ENCODE measurements at regions of chr3 and their contacts with region 1.

Region 1: GRCh38 chr3:58433400-58434169 is at the start of gene PDHB:
- DNase-seq: peak; percentile 78 to 91 (median 90)
- ATAC-seq: peak; percentile 98
- H3K4me3 ChIP-seq: peak within 1 kb of the TSS; percentile 92
- H3K4me3 Mint-ChIP-seq: peak within 1 kb of the TSS; percentile 90 to 98 (median 95)
- H3K27ac ChIP-seq: peak within 1 kb of the TSS; percentile 81
- H3K27ac Mint-ChIP-seq: peak within 1 kb of the TSS; percentile 94 to 98 (median 97)
- H3K4me1 ChIP-seq: peaks cover 14 to 15% of the 10 kb centered on the region in 2 donors
- H3K4me1 Mint-ChIP-seq: peaks cover 15 to 34% (median 27%) of the 10 kb centered on the region in 7 donors
- H3K27me3 ChIP-seq: no peaks in the 10 kb centered on the region
- H3K27me3 Mint-ChIP-seq: peaks cover 0 to 9% (median 0%) of the 10 kb centered on the region in 5 donors
- total RNA-seq, gene PDHB: 30.1 to 58.1 (median 54.0) TPM

Region 2: GRCh38 chr3:56556908-56557830 is 1876.4 kb before region 1 on chr3 and contains the start of gene CCDC66:
- CTCF ChIA-PET with region 1: no interaction called
- POLR2A ChIA-PET with region 1: no interaction called
- intact Hi-C with region 1: loop called in 1 of 2 experiments (anchors 5 kb)
- DNase-seq: peak; percentile 85 to 95 (median 93)
- ATAC-seq: peak; percentile 96
- H3K4me3 ChIP-seq: peak within 1 kb of the TSS; percentile 96
- H3K4me3 Mint-ChIP-seq: peak within 1 kb of the TSS; percentile 91 to 100 (median 98)
- H3K27ac ChIP-seq: peak within 1 kb of the TSS; percentile 99
- H3K27ac Mint-ChIP-seq: peak within 1 kb of the TSS; percentile 93 to 100 (median 98)
- H3K4me1 ChIP-seq: peaks cover 9 to 17% of the 10 kb centered on the region in 2 donors
- H3K4me1 Mint-ChIP-seq: peaks cover 12 to 51% (median 38%) of the 10 kb centered on the region in 7 donors
- H3K27me3 ChIP-seq: no peaks in the 10 kb centered on the region
- H3K27me3 Mint-ChIP-seq: peaks cover 0 to 25% (median 0%) of the 10 kb centered on the region in 5 donors
- total RNA-seq, gene CCDC66: 38.6 to 115 (median 77.3) TPM

Region 3: DNA sequence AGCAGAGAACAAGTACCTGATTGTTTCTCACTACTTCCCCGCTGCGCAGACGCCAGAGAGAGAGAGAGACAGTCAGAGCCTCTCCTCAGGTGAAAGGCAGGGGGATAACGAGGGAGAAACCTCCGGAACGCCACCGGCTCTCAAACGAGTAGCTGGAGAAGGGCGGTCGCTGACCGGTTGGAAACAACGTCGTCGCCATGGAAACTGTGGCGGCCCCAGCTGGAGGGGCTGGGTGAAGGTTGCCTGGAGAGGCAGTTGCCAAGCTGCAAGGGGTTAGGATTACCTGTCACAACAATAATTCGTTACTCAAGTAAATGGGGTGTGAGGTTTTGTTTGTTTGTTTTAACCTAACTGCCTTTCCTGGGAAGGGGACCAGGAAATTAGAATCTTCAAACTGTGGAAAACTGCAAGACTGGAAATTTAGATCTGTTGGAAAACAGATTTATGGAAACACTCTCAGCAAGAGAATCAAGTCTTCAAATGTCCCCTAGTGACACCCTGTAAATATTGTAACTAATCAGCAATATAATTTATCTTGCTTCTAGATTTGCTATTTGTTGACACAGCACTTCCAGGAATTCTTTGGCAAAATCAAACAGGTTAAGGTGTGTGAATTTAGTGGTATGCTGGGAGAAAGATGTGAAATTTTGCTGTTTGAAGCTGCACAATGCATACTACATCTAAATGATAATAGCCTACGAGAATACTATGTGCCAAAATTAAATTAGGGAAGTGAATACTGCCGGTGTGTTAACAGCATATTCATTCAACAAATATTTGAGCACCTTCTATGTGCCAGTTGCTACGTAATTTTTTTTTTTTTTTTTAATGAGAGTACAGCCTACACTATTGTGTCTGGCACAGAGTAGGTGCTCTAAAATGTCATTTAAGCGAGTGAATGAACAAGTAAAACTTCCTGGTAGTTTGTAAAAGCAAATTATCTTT is 889.1 kb before region 1 on chr3 and contains the start of gene DNAH12:
- CTCF ChIA-PET with region 1: no interaction called
- POLR2A ChIA-PET with region 1: no interaction called
- intact Hi-C with region 1: no loop called
- DNase-seq: peak in 1 of 9 donors; percentile 1
- ATAC-seq: no peak
- H3K4me3 ChIP-seq: no peak within 1 kb of the TSS
- H3K4me3 Mint-ChIP-seq: peak within 1 kb of the TSS in 2 of 10 donors; percentile 14 to 29
- H3K27ac ChIP-seq: no peak within 1 kb of the TSS
- H3K27ac Mint-ChIP-seq: no peak within 1 kb of the TSS
- H3K4me1 ChIP-seq: no peaks in the 10 kb centered on the region
- H3K4me1 Mint-ChIP-seq: peaks cover 0 to 10% (median 8%) of the 10 kb centered on the region in 7 donors
- H3K27me3 ChIP-seq: no peaks in the 10 kb centered on the region
- H3K27me3 Mint-ChIP-seq: peaks cover 0 to 12% (median 8%) of the 10 kb centered on the region in 5 donors
- total RNA-seq, gene DNAH12: 0.05 to 0.51 (median 0.19) TPM

Region 4: GRCh38 chr3:57597122-57597923 is 836.3 kb before region 1 on chr3 and contains the start of gene ARF4:
- CTCF ChIA-PET with region 1: no interaction called
- POLR2A ChIA-PET with region 1: no interaction called
- intact Hi-C with region 1: loop called in 1 of 2 experiments (anchors 1 kb)
- DNase-seq: peak; percentile 99 to 100 (median 100)
- ATAC-seq: peak; percentile 93
- H3K4me3 ChIP-seq: peak within 1 kb of the TSS; percentile 86
- H3K4me3 Mint-ChIP-seq: peak within 1 kb of the TSS; percentile 91 to 99 (median 98)
- H3K27ac ChIP-seq: peak within 1 kb of the TSS; percentile 94
- H3K27ac Mint-ChIP-seq: peak within 1 kb of the TSS; percentile 95 to 100 (median 99)
- H3K4me1 ChIP-seq: peaks cover 29 to 30% of the 10 kb centered on the region in 2 donors
- H3K4me1 Mint-ChIP-seq: peaks cover 33 to 64% (median 51%) of the 10 kb centered on the region in 7 donors
- H3K27me3 ChIP-seq: no peaks in the 10 kb centered on the region
- H3K27me3 Mint-ChIP-seq: no peaks in the 10 kb centered on the region
- total RNA-seq, gene ARF4: 50.9 to 85.5 (median 57.5) TPM

Region 5: DNA sequence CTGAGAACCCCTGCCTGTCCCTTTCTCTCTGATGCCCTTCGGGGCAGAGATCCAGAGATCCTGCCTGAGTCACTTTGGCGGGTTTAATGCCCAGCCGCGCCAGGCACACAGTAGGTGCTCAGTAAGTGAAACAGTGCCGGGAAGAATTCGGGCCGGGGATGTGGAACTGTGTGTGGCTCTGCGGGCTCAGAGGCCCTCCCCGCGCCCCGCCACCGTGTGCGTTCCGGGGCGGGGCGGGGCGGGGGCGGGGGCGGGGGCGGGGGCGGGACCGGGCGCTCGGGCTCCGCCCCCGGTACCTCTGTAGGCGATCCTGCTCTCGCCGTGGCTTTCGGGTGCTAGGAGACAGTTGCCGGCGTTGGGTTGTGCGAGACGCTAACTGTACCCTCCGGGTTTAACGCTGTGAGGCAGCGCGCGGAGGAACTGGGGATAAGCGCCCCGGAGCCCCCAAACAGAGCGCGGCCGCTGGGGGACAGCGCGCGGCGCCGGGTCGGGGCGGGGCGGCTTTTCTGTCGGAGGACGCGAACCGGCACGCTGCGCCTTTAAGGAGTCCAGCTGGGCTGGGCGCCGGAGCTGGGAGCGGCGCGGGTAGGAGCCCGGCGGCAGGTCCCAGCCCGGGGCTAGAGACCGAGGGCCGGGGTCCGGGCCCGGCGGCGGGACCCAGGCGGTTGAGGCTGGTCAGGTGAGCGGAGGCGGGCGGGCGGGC is 196.2 kb before region 1 on chr3 and contains the start of gene ABHD6:
- CTCF ChIA-PET with region 1: interaction called, 3 read pairs
- POLR2A ChIA-PET with region 1: no interaction called
- intact Hi-C with region 1: loop called (anchors 1 kb)
- DNase-seq: peak; percentile 58 to 95 (median 86)
- ATAC-seq: peak; percentile 91
- H3K4me3 ChIP-seq: peak within 1 kb of the TSS; percentile 86
- H3K4me3 Mint-ChIP-seq: peak within 1 kb of the TSS; percentile 84 to 98 (median 92)
- H3K27ac ChIP-seq: peak within 1 kb of the TSS; percentile 72
- H3K27ac Mint-ChIP-seq: peak within 1 kb of the TSS; percentile 50 to 87 (median 81)
- H3K4me1 ChIP-seq: peaks cover 6 to 12% of the 10 kb centered on the region in 2 donors
- H3K4me1 Mint-ChIP-seq: peaks cover 9 to 18% (median 13%) of the 10 kb centered on the region in 7 donors
- H3K27me3 ChIP-seq: no peaks in the 10 kb centered on the region
- H3K27me3 Mint-ChIP-seq: peaks cover 0 to 29% (median 13%) of the 10 kb centered on the region in 5 donors
- total RNA-seq, gene ABHD6: 3.1 to 7.3 (median 6.6) TPM

Region 6: DNA sequence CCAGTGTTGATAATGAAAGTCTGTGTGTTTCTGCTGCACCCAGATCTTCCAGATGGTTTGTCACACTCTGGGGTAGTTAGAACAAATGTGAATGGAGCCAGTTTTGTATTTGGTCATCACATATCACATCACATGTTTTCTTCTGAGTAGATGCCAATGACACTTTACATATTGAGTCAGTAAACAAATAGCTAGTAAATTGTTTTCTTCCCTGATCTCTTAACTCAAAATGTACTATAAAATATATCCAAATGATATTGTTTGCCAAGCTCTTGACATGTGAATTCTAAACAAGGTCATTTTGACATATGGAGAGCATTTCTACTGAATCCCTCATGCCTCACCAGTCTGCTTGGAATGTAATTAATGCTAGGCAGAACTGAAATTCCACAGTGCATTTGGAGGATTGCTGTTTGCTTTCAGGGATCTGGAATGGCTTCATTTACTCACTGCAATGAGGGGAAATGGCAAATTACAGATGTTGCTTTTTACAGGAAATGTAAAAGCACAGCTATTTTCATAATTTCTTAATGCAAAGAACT is 45.0 kb before region 1 on chr3:
- CTCF ChIA-PET with region 1: no interaction called
- POLR2A ChIA-PET with region 1: no interaction called
- intact Hi-C with region 1: no loop called
- DNase-seq: no peak
- ATAC-seq: no peak
- H3K4me3 ChIP-seq: no peak overlapping the region
- H3K4me3 Mint-ChIP-seq: no peak overlapping the region
- H3K27ac ChIP-seq: no peak overlapping the region
- H3K27ac Mint-ChIP-seq: peak overlapping the region in 1 of 9 donors; percentile 30
- H3K4me1 ChIP-seq: no peaks in the 10 kb centered on the region
- H3K4me1 Mint-ChIP-seq: peaks cover 0 to 30% (median 6%) of the 10 kb centered on the region in 7 donors
- H3K27me3 ChIP-seq: no peaks in the 10 kb centered on the region
- H3K27me3 Mint-ChIP-seq: no peaks in the 10 kb centered on the region

Region 7: GRCh38 chr3:58414538-58415197 is 18.9 kb before region 1 on chr3:
- CTCF ChIA-PET with region 1: interaction called, 6 read pairs
- POLR2A ChIA-PET with region 1: interaction called, 3 read pairs
- intact Hi-C with region 1: loop called in 1 of 2 experiments (anchors 2 kb)
- DNase-seq: peak in 7 of 9 donors; percentile 39 to 59 (median 47)
- ATAC-seq: peak; percentile 83
- H3K4me3 ChIP-seq: no peak overlapping the region
- H3K4me3 Mint-ChIP-seq: no peak overlapping the region
- H3K27ac ChIP-seq: no peak overlapping the region
- H3K27ac Mint-ChIP-seq: peak overlapping the region in 3 of 9 donors; percentile 5 to 48 (median 9)
- H3K4me1 ChIP-seq: no peaks in the 10 kb centered on the region
- H3K4me1 Mint-ChIP-seq: peaks cover 2 to 14% (median 8%) of the 10 kb centered on the region in 7 donors
- H3K27me3 ChIP-seq: no peaks in the 10 kb centered on the region
- H3K27me3 Mint-ChIP-seq: no peaks in the 10 kb centered on the region

Region 8: DNA sequence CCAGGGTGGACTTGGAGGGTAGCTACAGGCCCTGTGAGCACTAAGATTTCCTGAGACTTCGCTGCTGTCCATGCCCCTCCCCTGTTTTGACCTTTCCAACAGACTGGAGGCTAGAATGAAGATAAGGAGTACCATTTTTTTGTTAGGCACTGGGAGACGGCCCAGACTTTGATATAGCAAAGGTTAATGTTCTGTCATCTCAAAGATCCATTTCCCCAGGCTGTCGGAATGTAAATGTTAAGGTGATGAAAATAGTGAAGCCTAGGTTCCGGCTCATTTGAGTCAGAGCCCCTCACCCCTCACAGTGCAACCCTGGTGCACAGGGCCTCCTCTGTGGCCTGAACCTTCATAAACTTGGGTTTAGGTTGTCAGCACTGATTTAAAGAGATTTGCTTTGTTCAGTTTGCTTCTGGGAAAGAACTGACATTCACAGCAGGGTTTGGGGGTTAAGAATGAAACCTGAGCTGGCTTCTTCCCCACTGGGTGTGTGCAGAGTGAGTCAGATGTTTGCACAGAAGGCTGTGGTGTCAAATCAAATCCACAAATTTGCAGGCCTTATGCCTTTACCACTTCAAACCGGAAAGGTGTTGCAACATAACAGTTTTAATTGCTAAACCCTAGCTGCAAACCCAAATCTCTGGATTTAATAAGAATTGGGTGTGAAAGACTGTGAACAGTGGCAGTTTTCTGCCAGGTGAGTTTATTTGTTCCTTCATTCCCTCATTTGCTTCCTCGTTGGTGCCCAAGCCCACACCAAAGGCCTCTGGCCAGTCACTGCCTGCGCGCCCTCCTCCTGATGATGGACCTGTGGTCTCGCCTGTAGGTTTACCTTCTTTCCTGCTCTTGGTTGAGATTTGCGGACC is 37.7 kb after region 1 on chr3:
- CTCF ChIA-PET with region 1: no interaction called
- POLR2A ChIA-PET with region 1: interaction called, 4 read pairs
- intact Hi-C with region 1: loop called in 1 of 2 experiments (anchors 5 kb)
- DNase-seq: peak in 1 of 9 donors; percentile 60
- ATAC-seq: peak; percentile 93
- H3K4me3 ChIP-seq: peak overlapping the region; percentile 19
- H3K4me3 Mint-ChIP-seq: peak overlapping the region in 2 of 10 donors; percentile 5 to 64
- H3K27ac ChIP-seq: no peak overlapping the region
- H3K27ac Mint-ChIP-seq: peak overlapping the region in 5 of 9 donors; percentile 53 to 89 (median 74)
- H3K4me1 ChIP-seq: peaks cover 0 to 28% of the 10 kb centered on the region in 2 donors
- H3K4me1 Mint-ChIP-seq: peaks cover 5 to 64% (median 22%) of the 10 kb centered on the region in 7 donors
- H3K27me3 ChIP-seq: no peaks in the 10 kb centered on the region
- H3K27me3 Mint-ChIP-seq: peaks cover 0 to 2% (median 0%) of the 10 kb centered on the region in 5 donors

Region 9: DNA sequence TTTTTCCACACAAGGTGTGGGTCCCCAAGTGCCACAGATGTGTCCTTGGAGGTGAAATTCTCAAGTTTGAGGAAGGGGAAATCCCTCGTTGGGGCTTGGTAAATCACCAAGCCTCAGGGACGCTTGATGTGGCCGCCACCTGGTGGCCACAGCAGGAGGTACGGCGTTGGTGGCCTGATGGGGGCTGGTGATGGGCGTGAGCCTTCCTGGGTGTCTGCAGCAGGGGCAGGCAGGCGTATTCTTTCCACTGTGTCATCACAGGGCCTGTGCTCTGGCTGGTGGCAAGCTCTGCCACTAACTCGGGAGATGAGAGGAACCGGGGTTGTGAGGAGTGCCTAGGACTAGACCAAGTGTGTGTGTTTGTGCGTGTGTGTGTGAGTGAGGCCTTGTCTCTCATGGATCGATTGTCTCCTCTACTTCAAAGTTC is 99.2 kb after region 1 on chr3:
- CTCF ChIA-PET with region 1: no interaction called
- POLR2A ChIA-PET with region 1: no interaction called
- intact Hi-C with region 1: loop called (anchors 1 kb)
- DNase-seq: peak; percentile 63 to 80 (median 73)
- ATAC-seq: peak; percentile 97
- H3K4me3 ChIP-seq: no peak overlapping the region
- H3K4me3 Mint-ChIP-seq: peak overlapping the region in 1 of 10 donors; percentile 50
- H3K27ac ChIP-seq: no peak overlapping the region
- H3K27ac Mint-ChIP-seq: peak overlapping the region in 4 of 9 donors; percentile 23 to 42 (median 31)
- H3K4me1 ChIP-seq: peaks cover 0 to 6% of the 10 kb centered on the region in 2 donors
- H3K4me1 Mint-ChIP-seq: peaks cover 5 to 8% (median 7%) of the 10 kb centered on the region in 7 donors
- H3K27me3 ChIP-seq: no peaks in the 10 kb centered on the region
- H3K27me3 Mint-ChIP-seq: peaks cover 0 to 6% (median 0%) of the 10 kb centered on the region in 5 donors

Measured in naive thymus-derived CD4-positive, alpha-beta T cell (primary cell).